ENCODE measurements at regions of chr19 and their contacts with region 1.

Region 1: DNA sequence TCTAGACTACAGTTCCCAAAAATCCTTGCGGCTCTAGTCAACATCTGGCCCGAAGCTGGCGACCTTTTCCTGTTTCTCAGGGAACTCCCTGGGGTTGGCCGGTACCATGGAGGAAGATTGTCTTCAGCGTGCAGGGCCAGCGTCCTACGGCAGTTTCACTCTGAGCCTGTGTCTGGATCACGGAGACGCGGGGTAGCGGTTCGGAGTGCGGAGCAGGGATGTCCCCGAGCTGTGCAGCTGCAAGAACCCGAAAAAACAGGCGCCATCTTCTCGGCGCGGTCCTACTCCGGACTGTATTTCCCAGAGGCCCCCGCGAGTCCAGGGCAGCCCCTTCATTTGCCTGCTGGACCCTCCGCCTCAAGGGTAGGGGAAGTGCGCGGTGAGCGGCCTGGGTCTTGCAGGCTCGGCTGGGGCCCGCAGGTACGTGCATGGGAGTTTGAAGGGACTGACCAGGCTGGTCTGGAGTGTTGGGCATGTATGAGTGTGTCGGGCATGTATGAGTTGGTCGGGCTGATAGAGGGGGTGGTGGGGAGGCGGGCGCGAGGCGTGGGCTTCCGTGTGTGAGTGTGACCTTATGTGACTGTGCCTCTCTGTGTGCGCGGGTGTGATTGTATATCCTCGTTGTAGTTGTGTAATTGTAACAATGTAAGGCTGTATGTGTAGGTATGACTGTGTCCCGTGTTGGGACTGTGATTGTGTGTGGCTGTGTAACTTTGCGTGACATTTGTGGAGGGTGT is at the start of gene ZNF383:
- DNase-seq: peak; percentile 87 to 95 (median 94)
- ATAC-seq: peak; percentile 98
- H3K4me3 ChIP-seq: peak within 1 kb of the TSS; percentile 66
- H3K27ac ChIP-seq: peak within 1 kb of the TSS; percentile 95
- H3K4me1 ChIP-seq: peaks cover 5% of the 10 kb centered on the region
- H3K27me3 ChIP-seq: no peaks in the 10 kb centered on the region
- total RNA-seq, gene ZNF383: 11.1 to 12.8 (median 11.6) TPM

Region 2: DNA sequence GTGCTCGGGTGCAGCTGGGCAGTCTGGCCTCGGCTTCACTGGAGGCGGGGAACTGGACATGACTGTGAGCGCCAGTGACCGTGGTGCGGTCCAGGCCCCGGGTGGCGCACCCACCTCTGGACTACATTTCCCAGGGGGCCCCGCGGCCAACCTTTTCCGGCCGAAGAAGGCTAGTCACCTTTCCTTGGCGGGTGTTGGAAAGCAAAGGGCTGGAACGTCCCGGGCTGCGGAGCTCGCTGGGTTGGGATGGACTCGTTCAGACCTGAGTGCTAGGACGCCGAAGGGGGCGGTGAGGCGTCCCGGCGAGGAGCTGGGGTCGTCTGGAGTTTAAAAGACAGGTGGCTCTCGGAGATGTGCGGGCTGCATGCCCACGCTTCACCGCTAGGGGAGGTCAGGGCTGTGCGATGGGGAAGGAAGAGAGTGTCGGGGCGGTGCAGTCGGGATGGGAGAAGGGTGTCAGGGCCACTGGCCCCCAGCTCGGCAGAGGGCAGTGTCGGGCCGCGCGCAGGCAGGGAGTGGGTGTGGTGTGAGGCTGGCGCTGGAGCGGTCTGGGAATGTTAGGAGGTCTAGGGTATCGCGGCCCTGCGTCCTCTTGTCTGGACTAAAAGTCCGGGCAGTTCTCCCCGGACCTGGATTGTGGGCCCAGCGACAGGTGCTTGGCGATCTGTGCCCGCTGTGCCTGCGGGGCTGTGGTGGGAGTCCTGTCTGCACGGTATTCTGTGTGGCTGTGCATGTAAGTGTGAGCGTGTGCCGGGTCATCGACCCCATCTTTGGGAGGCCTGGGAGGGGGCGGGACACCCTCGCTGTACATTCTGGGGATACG is 244.8 kb before region 1 on chr19:
- intact Hi-C with region 1: loop called in 2 of 4 experiments (anchors 10 kb)
- DNase-seq: peak; percentile 91 to 95 (median 95)
- ATAC-seq: peak; percentile 99 to 100
- H3K4me3 ChIP-seq: peak overlapping the region; percentile 43
- H3K27ac ChIP-seq: peak overlapping the region; percentile 36
- H3K4me1 ChIP-seq: no peaks in the 10 kb centered on the region
- H3K27me3 ChIP-seq: no peaks in the 10 kb centered on the region

Region 3: DNA sequence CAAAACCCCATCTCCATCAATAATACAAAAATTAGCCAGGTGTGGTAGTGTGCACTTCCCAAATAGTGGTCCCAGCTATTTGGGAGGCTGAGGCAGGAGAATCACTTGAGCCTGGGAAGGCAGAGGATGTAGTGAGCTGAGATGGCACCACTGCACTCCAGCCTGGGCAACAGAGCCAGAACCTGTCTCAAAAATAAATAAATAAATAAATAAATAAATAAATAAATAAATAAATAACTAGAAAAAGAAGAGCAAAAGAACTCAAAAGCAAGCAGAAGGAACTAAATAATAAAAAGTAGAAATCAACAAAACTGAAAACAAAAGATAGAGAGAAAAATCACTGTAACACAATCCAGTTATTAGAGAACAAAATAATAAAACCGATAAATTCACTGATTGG is 57.9 kb before region 1 on chr19:
- intact Hi-C with region 1: no loop called
- DNase-seq: no peak
- ATAC-seq: no peak
- H3K4me3 ChIP-seq: no peak overlapping the region
- H3K27ac ChIP-seq: no peak overlapping the region
- H3K4me1 ChIP-seq: no peaks in the 10 kb centered on the region
- H3K27me3 ChIP-seq: no peaks in the 10 kb centered on the region

Region 4: DNA sequence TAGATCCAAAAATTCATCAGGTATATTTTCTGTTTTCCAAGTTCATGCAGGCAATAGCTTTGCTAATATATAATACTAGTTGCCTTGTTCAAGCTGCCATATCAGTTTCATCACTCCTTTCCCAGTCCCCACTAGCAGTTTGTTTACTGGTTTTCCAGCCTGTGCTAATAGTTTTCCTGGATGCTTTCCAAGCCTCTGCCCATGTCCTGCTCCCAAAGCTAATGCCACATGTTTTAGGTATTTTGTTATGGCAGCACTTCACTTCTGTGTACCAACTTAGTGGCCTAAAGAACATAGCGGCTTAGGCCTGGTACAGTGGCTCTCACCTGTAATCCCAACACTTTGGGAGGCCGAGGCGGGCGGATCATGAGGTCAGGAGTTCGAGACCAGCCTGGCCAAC is 124.7 kb after region 1 on chr19:
- intact Hi-C with region 1: no loop called
- DNase-seq: no peak
- ATAC-seq: no peak
- H3K4me3 ChIP-seq: no peak overlapping the region
- H3K27ac ChIP-seq: no peak overlapping the region
- H3K4me1 ChIP-seq: peaks cover 2% of the 10 kb centered on the region
- H3K27me3 ChIP-seq: no peaks in the 10 kb centered on the region

Measured in right cardiac atrium (tissue), 5 donors.